ENCODE measurements at regions of chr2 and their contacts with region 1.

Region 1: GRCh38 chr2:118705032-118705431 is 142.4 kb downstream of the EN1 start:
- DNase-seq: peak; percentile 58
- H3K4me3 ChIP-seq: no peak overlapping the region
- H3K27ac ChIP-seq: no peak overlapping the region
- H3K4me1 ChIP-seq: no peaks in the 10 kb centered on the region
- H3K27me3 ChIP-seq: no peaks in the 10 kb centered on the region
- CTCF ChIP-seq: no peak

Region 2: DNA sequence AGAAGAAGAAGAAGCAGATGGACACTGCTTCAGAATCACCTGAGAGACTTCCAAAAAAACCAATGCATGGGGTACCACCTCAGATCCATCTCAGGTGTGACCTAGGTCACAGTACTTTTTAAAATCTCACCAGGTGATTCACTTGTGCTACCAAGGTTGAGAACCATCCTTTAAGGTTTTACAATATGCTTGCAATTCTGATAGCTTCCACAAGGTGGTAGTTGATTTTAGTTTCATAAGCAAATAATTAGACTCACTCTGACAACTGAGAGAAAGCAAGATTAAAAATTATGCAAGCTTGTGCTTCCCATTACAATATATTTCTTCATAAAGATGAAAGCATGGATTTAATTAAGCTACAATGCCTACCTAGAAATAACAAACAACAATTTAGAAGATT is 212.7 kb before region 1 on chr2:
- CTCF ChIA-PET with region 1: no interaction called
- dilution Hi-C with region 1: no loop called
- in situ Hi-C with region 1: no loop called
- intact Hi-C with region 1: no loop called
- DNase-seq: peak; percentile 25
- H3K4me3 ChIP-seq: no peak overlapping the region
- H3K27ac ChIP-seq: no peak overlapping the region
- H3K4me1 ChIP-seq: peaks cover 7% of the 10 kb centered on the region
- H3K27me3 ChIP-seq: no peaks in the 10 kb centered on the region
- CTCF ChIP-seq: peak; percentile 26 to 32

Region 3: DNA sequence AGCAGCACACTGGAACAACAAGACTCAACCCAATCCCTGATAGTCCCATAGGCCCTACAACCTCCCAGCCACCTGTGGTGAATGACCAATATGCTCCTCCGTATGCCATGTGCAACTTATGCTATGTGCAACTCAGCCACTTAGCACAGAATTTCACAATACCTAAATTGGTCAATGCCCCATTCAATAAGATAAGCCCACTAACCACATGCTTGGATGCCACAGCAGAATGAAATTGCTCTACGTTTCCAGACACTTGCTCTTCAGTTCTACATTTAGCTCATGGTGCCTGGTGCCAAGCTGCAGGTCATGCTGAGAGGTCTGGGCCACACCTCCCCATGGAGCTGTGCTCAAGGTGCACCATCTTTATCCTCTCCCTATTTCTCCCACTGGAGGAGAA is 17.3 kb before region 1 on chr2:
- CTCF ChIA-PET with region 1: no interaction called
- dilution Hi-C with region 1: no loop called
- in situ Hi-C with region 1: no loop called
- intact Hi-C with region 1: loop called (anchors 1 kb)
- DNase-seq: peak; percentile 52
- H3K4me3 ChIP-seq: no peak overlapping the region
- H3K27ac ChIP-seq: peak overlapping the region; percentile 4
- H3K4me1 ChIP-seq: peaks cover 19% of the 10 kb centered on the region
- H3K27me3 ChIP-seq: no peaks in the 10 kb centered on the region
- CTCF ChIP-seq: no peak

Region 4: DNA sequence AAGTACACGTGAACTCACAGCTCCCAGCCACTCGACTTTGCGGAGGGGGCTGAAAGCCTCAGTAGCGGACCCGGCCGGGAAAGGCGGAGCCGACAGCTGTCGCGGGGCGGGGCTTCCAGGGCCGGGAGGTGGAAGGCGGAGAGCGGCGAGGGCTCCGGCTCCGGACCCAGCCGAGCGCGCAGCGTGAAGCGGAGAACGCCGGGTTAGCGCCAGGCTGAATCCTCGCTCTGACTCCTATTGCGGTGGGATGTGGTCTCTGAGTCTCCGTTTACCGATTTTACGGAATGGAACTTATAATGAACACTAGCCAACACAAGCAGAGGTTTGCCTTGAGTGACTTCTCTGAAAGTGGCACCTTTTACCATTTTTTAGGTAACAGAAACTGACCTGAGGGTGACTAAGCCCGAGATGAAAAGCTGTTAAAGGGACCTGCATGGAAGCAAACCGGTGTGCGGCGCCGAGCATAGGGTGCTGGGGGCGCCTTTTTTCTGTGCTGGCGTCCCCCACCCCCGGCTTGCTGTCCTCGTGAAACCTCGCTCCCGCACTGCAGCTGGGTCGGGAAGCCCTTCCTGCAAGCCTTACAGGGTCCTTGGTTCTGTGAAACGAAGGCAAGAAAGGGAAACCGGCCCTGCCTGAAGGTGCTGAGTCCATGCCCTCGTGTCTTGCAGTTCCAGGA is 69.6 kb after region 1 on chr2:
- CTCF ChIA-PET with region 1: no interaction called
- dilution Hi-C with region 1: loop called (anchors 5 kb)
- in situ Hi-C with region 1: no loop called
- intact Hi-C with region 1: no loop called
- DNase-seq: peak; percentile 59
- H3K4me3 ChIP-seq: peak overlapping the region; percentile 53 to 83 (median 72)
- H3K27ac ChIP-seq: no peak overlapping the region
- H3K4me1 ChIP-seq: peaks cover 7% of the 10 kb centered on the region
- H3K27me3 ChIP-seq: no peaks in the 10 kb centered on the region
- CTCF ChIP-seq: no peak

Measured in mammary epithelial cell (primary cell).